ENCODE measurements at regions of chr6 and their contacts with region 1.

Region 1: DNA sequence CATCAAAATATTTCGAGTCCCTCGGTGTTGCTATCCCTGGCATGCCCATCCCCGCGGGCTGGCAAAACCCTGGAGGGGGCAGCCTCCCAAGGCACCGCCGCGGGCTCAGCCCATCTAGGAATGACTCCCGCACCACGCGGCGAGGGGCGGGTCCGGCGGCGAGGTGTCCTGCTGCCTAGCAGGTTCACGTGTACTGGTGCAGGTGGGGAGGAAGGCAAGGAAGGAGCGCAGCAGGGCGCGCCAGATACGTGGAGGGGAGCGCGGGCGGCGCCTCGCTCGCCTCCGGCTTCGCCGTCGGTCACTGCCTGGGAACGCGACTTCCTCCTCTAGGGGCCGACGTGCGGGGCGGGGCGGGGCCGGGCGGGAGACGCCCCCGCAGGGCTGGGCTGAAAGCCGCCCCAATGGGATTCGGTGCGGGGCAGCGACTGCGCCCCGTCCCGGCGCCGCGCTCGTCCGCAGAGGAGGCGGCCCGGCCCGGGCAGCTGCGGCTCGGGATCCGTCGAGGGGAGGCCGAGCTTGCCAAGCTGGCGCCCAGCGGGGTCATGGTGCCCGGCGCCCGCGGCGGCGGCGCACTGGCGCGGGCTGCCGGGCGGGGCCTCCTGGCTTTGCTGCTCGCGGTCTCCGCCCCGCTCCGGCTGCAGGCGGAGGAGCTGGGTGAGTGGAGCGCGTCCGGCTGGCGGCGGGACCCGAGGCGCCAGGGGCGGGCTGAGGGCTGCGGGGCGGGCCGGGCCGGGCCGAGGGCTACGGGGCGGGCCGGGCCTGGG is at the start of gene DCBLD1:
- DNase-seq: peak; percentile 82
- H3K4me3 ChIP-seq: peak within 1 kb of the TSS; percentile 57 to 82 (median 76)
- H3K27ac ChIP-seq: peak within 1 kb of the TSS; percentile 81 to 88 (median 84)
- H3K4me1 ChIP-seq: peaks cover 0 to 23% (median 14%) of the 10 kb centered on the region in 4 donors
- H3K27me3 ChIP-seq: no peaks in the 10 kb centered on the region
- CTCF ChIP-seq: no peak
- EP300 ChIP-seq: no peak
- POLR2A ChIP-seq: no peak
- total RNA-seq, gene DCBLD1: 5.8 to 16.3 (median 9.7) TPM

Region 2: GRCh38 chr6:117547688-117548621 is 65.5 kb after region 1 on chr6:
- intact Hi-C with region 1: loop called (anchors 5 kb)
- DNase-seq: peak; percentile 74
- H3K4me3 ChIP-seq: peak overlapping the region; percentile 31 to 57 (median 46)
- H3K27ac ChIP-seq: peak overlapping the region; percentile 31 to 64 (median 48)
- H3K4me1 ChIP-seq: peaks cover 0 to 17% (median 9%) of the 10 kb centered on the region in 4 donors
- H3K27me3 ChIP-seq: no peaks in the 10 kb centered on the region
- CTCF ChIP-seq: no peak
- EP300 ChIP-seq: no peak
- POLR2A ChIP-seq: no peak

Measured in sigmoid colon (tissue), 7 donors.